ENCODE measurements at regions of chr19 and their contacts with region 1.

Region 1: DNA sequence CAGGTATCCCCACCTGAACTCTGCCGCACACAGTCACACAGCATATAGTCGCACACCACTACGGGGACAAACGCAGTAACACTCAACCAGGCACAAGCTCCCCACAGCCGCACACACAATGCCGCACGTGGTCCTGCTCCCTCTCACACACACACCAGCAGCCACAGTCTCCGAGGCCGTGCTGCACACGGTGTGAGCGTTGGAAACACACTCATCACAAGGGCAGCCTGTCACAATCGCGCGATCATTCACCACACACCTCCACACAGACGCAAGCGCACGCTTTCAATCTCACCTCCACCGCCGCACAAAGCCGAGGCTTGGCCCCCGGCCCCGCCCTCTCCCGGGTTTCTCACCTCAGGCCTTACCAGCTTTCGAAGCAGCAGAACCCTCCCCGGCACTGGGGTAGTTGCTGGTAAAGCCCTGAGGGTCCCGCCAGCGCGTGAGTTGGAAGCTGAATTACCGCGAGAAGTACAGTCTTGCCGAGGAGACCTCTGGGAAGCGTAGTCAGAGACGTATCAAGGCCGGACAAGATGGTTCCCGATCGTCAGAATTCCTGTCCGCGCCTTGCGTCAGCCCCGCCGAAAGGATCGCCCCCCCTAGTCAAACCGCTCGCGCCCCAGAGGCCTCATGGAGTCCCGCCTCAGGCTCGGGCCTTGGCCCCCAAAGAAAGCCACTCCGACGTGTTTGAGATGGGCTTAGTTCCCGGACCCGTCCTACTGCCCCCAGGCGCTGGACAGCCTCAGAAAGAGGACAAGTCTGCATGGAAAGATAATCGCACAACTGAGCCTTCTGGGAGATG is at the start of gene ZNF566:
- DNase-seq: peak; percentile 96
- H3K4me3 Mint-ChIP-seq: peak within 1 kb of the TSS; percentile 95
- H3K27ac Mint-ChIP-seq: peak within 1 kb of the TSS; percentile 99
- H3K4me1 Mint-ChIP-seq: peaks cover 23% of the 10 kb centered on the region
- H3K27me3 Mint-ChIP-seq: no peaks in the 10 kb centered on the region
- total RNA-seq, gene ZNF566: 3.8 to 4.6 TPM

Region 2: DNA sequence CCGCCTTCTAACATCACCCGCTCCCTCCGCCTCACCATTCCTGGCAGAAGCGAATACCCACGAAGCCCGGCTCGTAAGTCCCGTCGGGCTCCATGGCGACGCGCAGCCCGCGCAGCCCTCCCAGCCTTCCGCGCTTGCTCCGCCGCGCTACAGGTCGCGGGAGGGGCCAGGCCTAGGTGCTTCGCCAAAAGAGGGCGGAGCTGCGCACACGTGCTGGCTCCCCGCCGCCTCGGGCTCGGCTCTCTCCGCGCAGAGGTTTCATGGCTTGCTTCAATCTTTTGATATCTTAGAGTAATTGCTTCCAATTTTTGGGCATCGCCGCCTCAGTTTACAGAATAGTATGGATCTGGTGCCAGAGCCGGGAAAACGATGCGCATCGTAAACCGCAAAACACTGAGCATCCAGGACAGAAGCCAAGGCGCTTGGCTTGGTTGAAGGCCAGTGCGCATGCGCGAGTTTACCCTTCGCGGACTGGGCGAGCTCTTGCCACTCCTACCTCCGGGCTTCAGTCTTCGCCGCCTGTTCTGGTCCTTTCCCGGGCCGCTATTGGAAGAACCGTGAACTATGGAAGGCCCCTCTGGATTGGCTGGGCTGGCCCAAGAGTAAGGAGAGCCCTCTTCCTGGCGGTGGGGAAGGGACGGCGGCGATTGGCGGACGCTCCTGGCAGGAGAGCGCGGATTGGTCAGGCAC is 374.4 kb before region 1 on chr19 and contains the start of gene POLR2I:
- CTCF ChIA-PET with region 1: no interaction called
- POLR2A ChIA-PET with region 1: no interaction called
- intact Hi-C with region 1: loop called (anchors 5 kb)
- DNase-seq: peak; percentile 99
- H3K4me3 Mint-ChIP-seq: peak within 1 kb of the TSS; percentile 99
- H3K27ac Mint-ChIP-seq: peak within 1 kb of the TSS; percentile 94
- H3K4me1 Mint-ChIP-seq: peaks cover 36% of the 10 kb centered on the region
- H3K27me3 Mint-ChIP-seq: peaks cover 5% of the 10 kb centered on the region
- total RNA-seq, gene POLR2I: 84.1 to 84.8 TPM

Region 3: DNA sequence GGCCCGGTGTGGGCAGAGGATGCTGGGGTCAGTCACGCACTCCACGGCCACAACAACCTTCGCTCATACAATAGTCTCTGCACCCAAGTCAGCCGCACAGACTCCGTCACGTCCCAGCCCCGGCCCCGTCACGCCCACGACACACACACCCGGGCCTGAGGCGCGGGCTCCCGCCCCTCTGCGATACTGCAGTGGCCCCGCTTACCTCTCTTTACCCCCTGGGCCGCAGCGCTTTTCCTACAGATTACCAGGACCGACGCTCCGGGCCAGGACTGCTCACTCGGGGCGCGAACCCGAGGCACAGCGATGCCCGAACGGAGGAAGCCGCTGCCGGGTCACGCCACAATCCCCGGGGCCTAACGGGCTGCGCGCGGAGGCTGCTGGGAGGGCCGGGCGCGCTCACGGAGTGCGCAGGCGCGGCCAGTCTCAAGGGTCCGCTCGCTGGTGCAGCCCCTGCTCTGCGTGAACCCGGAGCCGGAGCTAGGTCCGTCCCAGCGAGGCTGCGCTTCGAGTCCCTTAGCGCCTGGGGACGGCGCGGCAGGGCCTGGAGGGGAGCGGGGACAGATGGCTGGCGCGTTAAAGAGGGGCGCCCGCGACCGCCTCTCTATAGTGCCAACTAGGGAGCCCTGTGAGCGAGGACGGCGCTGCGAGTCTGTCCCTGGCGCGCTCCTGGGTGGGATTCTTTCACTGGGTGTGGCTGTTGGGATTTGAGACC is 70.9 kb before region 1 on chr19 and contains the start of gene ZFP82:
- CTCF ChIA-PET with region 1: no interaction called
- POLR2A ChIA-PET with region 1: no interaction called
- intact Hi-C with region 1: loop called (anchors 1 kb)
- DNase-seq: peak; percentile 83
- H3K4me3 Mint-ChIP-seq: peak within 1 kb of the TSS; percentile 91
- H3K27ac Mint-ChIP-seq: peak within 1 kb of the TSS; percentile 89
- H3K4me1 Mint-ChIP-seq: peaks cover 26% of the 10 kb centered on the region
- H3K27me3 Mint-ChIP-seq: peaks cover 15% of the 10 kb centered on the region
- total RNA-seq, gene ZFP82: 3.7 to 3.9 TPM

Region 4: GRCh38 chr19:36605101-36605876 is 116.0 kb after region 1 on chr19 and contains the start of gene ZNF382:
- CTCF ChIA-PET with region 1: interaction called, 3 read pairs
- POLR2A ChIA-PET with region 1: interaction called, 10 read pairs
- intact Hi-C with region 1: loop called (anchors 1 kb)
- DNase-seq: peak; percentile 90
- H3K4me3 Mint-ChIP-seq: peak within 1 kb of the TSS; percentile 92
- H3K27ac Mint-ChIP-seq: peak within 1 kb of the TSS; percentile 95
- H3K4me1 Mint-ChIP-seq: peaks cover 24% of the 10 kb centered on the region
- H3K27me3 Mint-ChIP-seq: no peaks in the 10 kb centered on the region
- total RNA-seq, gene ZNF382: 10.9 to 14.8 TPM

Region 5: GRCh38 chr19:36687214-36688056 is 198.1 kb after region 1 on chr19 and contains the start of gene ZNF567:
- CTCF ChIA-PET with region 1: no interaction called
- POLR2A ChIA-PET with region 1: interaction called, 3 read pairs
- intact Hi-C with region 1: loop called (anchors 1 kb)
- DNase-seq: peak; percentile 99
- H3K4me3 Mint-ChIP-seq: peak within 1 kb of the TSS; percentile 99
- H3K27ac Mint-ChIP-seq: peak within 1 kb of the TSS; percentile 90
- H3K4me1 Mint-ChIP-seq: peaks cover 24% of the 10 kb centered on the region
- H3K27me3 Mint-ChIP-seq: no peaks in the 10 kb centered on the region
- total RNA-seq, gene ZNF567: 4.9 to 5.3 TPM

Region 6: GRCh38 chr19:37077934-37078725 is 588.8 kb after region 1 on chr19 and contains the start of gene ZNF420:
- CTCF ChIA-PET with region 1: no interaction called
- POLR2A ChIA-PET with region 1: no interaction called
- intact Hi-C with region 1: loop called (anchors 5 kb)
- DNase-seq: peak; percentile 93
- H3K4me3 Mint-ChIP-seq: peak within 1 kb of the TSS; percentile 94
- H3K27ac Mint-ChIP-seq: peak within 1 kb of the TSS; percentile 79
- H3K4me1 Mint-ChIP-seq: peaks cover 31% of the 10 kb centered on the region
- H3K27me3 Mint-ChIP-seq: no peaks in the 10 kb centered on the region
- total RNA-seq, gene ZNF420: 6.5 to 8.7 TPM